ENCODE measurements at regions of chrX and their contacts with region 1.

Region 1: DNA sequence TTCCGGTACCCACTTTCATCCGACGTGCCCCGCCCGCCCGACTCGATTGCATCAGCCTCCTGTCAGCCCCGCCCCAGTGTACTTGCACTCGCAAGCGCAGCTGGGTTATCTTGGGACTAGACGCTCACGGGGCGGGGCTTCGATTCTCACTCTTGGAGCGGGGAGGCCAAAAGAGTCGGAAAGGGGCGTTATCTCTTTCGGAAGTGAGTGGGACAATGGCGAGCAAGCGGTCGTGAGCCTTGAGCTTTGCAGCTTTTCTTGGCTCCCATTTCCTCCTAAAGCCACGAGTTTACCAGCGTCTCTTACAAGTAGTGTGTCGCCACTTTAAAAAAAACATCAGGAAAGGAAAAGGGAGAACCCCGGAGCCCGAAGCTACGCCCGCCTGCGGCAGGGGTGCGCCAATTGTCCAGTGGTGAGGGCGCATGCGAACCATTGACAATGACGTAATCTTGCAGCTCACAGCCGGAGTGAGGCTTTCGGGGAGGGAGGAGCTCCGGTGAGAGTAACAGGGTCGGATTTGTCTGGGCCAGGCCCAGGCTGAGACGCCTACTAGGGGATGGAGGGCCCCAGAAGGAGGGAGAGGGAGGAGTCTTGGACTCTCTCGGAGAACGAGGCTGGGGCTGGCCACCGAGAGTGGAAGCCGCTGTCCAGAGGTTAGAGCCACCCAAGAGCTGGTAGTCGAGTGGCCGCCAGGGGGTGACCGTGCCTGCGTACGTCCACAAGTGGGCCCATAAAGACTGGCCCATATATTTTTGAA is 109.5 kb downstream of the GNL3L start:
- DNase-seq: peak; percentile 94
- ATAC-seq: peak; percentile 85
- H3K4me3 ChIP-seq: peak overlapping the region; percentile 61 to 71 (median 66)
- H3K4me3 Mint-ChIP-seq: peak overlapping the region; percentile 96
- H3K27ac ChIP-seq: peak overlapping the region; percentile 98
- H3K27ac Mint-ChIP-seq: peak overlapping the region; percentile 99
- H3K4me1 ChIP-seq: peaks cover 0 to 12% of the 10 kb centered on the region in 2 donors
- H3K4me1 Mint-ChIP-seq: peaks cover 10% of the 10 kb centered on the region
- H3K27me3 ChIP-seq: no peaks in the 10 kb centered on the region
- H3K27me3 Mint-ChIP-seq: no peaks in the 10 kb centered on the region
- CTCF ChIP-seq: peak; percentile 59

Region 2: DNA sequence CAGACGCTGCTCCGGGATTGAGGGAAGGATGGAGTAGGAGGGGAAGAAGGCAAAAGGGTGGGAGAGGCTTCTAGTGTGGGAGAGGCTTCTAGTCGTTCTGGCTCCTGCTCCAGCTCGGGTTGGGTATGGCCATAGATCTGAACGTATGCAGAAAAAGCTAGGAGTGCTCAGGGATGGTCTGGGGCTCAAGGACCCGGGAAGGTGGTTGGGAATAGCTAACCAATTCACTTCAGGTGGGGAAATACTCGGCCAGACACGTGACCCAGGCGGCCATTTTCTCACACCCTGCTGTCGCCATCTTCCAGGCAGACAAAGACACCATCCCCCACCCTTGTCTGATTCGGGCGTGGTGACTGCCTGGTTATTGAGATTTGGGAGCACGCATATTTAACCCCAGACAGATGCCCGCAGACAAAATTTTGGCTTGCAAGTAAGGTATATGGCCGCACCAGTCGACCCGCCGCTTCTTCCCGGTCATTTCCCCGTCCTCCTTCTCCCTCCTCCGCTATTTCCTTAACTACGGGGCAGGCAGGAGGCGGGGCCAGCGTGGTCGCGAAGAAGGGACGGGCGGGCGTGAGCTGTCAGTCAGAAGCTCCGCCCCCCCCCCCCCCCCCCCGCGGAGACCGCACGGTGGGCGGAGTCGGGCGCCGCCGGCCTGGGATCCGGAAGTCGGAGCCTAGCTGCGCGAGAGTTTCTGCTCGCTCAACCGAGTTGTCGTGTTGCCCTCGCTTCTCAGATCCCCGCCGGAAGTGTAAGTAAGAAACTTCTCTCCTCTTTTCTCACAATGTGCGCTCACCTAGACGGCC is 109.8 kb before region 1 on chrX and contains the start of gene GNL3L:
- CTCF ChIA-PET with region 1: interaction called, 13 read pairs
- POLR2A ChIA-PET with region 1: interaction called, 14 read pairs
- intact Hi-C with region 1: no loop called
- DNase-seq: peak; percentile 89
- ATAC-seq: peak; percentile 86
- H3K4me3 ChIP-seq: peak within 1 kb of the TSS; percentile 64 to 93 (median 75)
- H3K4me3 Mint-ChIP-seq: peak within 1 kb of the TSS; percentile 93
- H3K27ac ChIP-seq: peak within 1 kb of the TSS; percentile 89 to 91
- H3K27ac Mint-ChIP-seq: peak within 1 kb of the TSS; percentile 97
- H3K4me1 ChIP-seq: peaks cover 13 to 31% of the 10 kb centered on the region in 2 donors
- H3K4me1 Mint-ChIP-seq: peaks cover 34% of the 10 kb centered on the region
- H3K27me3 ChIP-seq: no peaks in the 10 kb centered on the region
- H3K27me3 Mint-ChIP-seq: no peaks in the 10 kb centered on the region
- CTCF ChIP-seq: no peak
- total RNA-seq, gene GNL3L: 47.2 and 52.4 TPM in 2 replicates

Region 3: GRCh38 chrX:54615109-54615508 is 24.4 kb before region 1 on chrX:
- CTCF ChIA-PET with region 1: no interaction called
- POLR2A ChIA-PET with region 1: no interaction called
- intact Hi-C with region 1: no loop called
- DNase-seq: no peak
- ATAC-seq: no peak
- H3K4me3 ChIP-seq: no peak overlapping the region
- H3K4me3 Mint-ChIP-seq: no peak overlapping the region
- H3K27ac ChIP-seq: no peak overlapping the region
- H3K27ac Mint-ChIP-seq: no peak overlapping the region
- H3K4me1 ChIP-seq: no peaks in the 10 kb centered on the region
- H3K4me1 Mint-ChIP-seq: no peaks in the 10 kb centered on the region
- H3K27me3 ChIP-seq: no peaks in the 10 kb centered on the region
- H3K27me3 Mint-ChIP-seq: no peaks in the 10 kb centered on the region
- CTCF ChIP-seq: no peak

Region 4: GRCh38 chrX:54786962-54787361 is 147.4 kb after region 1 on chrX:
- CTCF ChIA-PET with region 1: interaction called, 22 read pairs
- POLR2A ChIA-PET with region 1: interaction called, 3 read pairs
- intact Hi-C with region 1: loop called (anchors 1 kb)
- DNase-seq: peak; percentile 23
- ATAC-seq: peak; percentile 54
- H3K4me3 ChIP-seq: no peak overlapping the region
- H3K4me3 Mint-ChIP-seq: no peak overlapping the region
- H3K27ac ChIP-seq: no peak overlapping the region
- H3K27ac Mint-ChIP-seq: no peak overlapping the region
- H3K4me1 ChIP-seq: no peaks in the 10 kb centered on the region
- H3K4me1 Mint-ChIP-seq: no peaks in the 10 kb centered on the region
- H3K27me3 ChIP-seq: no peaks in the 10 kb centered on the region
- H3K27me3 Mint-ChIP-seq: no peaks in the 10 kb centered on the region
- CTCF ChIP-seq: peak; percentile 7

Region 5: GRCh38 chrX:55057675-55058249 is 418.2 kb after region 1 on chrX:
- CTCF ChIA-PET with region 1: interaction called, 6 read pairs
- POLR2A ChIA-PET with region 1: no interaction called
- intact Hi-C with region 1: loop called (anchors 1 kb)
- DNase-seq: peak; percentile 53
- ATAC-seq: peak; percentile 71
- H3K4me3 ChIP-seq: peak overlapping the region in 3 of 5 experiments; percentile 18 to 24 (median 18)
- H3K4me3 Mint-ChIP-seq: peak overlapping the region; percentile 78
- H3K27ac ChIP-seq: no peak overlapping the region
- H3K27ac Mint-ChIP-seq: no peak overlapping the region
- H3K4me1 ChIP-seq: peaks cover 6 to 7% of the 10 kb centered on the region in 2 donors
- H3K4me1 Mint-ChIP-seq: peaks cover 10% of the 10 kb centered on the region
- H3K27me3 ChIP-seq: no peaks in the 10 kb centered on the region
- H3K27me3 Mint-ChIP-seq: no peaks in the 10 kb centered on the region
- CTCF ChIP-seq: peak; percentile 77